ENCODE measurements at regions of chr5 and their contacts with region 1.

Region 1: DNA sequence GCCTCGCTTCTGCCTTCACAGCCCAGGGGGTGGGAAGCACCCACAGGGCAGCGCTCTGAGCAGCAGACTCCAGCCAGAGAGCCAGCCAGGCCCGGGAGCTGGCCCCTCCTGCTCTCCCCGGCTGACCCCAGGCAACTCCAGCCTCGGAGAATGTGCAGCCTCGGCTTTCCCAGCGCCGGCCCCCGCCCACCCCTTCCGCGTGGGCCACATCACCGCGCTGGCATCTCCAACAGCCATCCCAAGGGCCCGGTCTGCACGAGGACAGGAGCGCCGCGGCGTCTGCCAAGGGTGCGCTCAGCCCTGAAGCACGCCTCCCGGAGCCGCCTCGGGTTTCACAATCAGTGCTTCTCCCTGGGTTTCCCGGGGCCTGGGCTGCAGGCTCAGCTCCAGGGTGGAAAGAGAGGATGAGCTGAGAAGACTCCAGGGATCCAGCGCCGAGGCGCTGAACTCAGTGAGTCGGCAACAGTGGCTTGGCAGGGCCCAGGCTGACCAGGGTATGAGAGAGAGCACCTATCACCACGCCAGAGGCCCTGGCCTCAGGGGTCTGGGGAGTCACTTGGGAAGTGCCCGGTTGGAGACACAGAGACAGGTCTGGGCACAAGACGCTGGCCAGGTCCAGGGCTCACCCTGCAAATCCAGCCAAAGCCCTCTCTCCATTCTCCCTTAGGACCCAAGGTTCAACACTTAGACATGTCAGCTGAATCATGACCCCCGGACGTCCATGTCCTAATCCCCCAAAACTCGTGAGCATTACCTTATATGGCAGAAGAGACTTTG is 79.6 kb downstream of the ADAMTS2 start:
- DNase-seq: peak; percentile 92

Region 2: GRCh38 chr5:179227229-179227579 is 38.5 kb before region 1 on chr5:
- intact Hi-C with region 1: no loop called
- DNase-seq: peak; percentile 53

Region 3: GRCh38 chr5:179288101-179288808 is 22.6 kb after region 1 on chr5:
- intact Hi-C with region 1: loop called (anchors 2 kb)
- DNase-seq: no peak

Region 4: GRCh38 chr5:179313849-179314521 is 48.3 kb after region 1 on chr5:
- intact Hi-C with region 1: loop called (anchors 1 kb)
- DNase-seq: peak; percentile 90

Region 5: GRCh38 chr5:179345433-179346321 is 80.0 kb after region 1 on chr5 and contains the start of gene ADAMTS2:
- intact Hi-C with region 1: loop called (anchors 5 kb)
- DNase-seq: no peak
- total RNA-seq, gene ADAMTS2: 5.9 TPM

Measured in cardiac septum (tissue), 1 donor.